Activated CD4-positive, alpha-beta T cell treated with anti-CD3 and anti-CD28 coated beads for 36 hours (primary cell): ENCODE measurements at regions of chr11 and their contacts with region 1.

Region 1: DNA sequence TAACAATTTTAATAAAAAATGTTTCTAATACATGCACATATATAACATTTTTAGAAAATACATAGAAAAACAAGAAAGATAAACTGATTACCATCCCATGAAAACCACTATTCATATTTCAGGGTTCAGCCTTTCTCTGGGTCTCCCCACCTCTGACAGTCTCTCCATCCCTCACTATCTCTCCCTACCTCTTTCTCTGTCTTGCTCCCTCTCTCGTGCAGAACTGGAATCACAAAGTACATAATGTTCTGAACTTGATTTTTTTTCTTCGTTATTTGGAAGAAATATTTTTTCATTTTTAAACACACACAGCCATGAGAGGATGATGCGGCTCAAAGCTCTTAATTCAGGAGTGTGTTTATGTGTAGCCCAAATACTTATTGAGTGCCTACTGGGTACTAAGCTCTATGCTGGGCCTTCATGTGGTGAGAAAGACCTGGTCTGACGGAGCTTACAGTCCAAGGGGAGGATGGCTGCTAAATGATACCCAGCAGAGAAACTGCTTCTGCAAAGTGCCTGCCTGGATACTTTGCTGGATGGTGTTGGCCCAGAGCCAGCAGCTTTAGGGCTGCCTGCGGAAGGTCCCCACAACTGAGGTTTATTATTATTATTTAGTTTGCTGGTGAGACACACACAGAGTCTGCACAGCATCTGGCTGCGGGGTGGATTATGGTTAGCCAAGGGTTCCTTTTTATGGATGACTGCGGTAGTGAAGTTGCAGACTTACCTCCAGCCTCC is 42.6 kb downstream of the SC5D start:
- DNase-seq: no peak
- ATAC-seq: no peak
- H3K4me3 Mint-ChIP-seq: no peak overlapping the region
- H3K27ac Mint-ChIP-seq: no peak overlapping the region
- H3K4me1 Mint-ChIP-seq: peaks cover 25% of the 10 kb centered on the region
- H3K27me3 Mint-ChIP-seq: no peaks in the 10 kb centered on the region

Region 2: GRCh38 chr11:121376130-121376529 is 41.0 kb after region 1 on chr11:
- CTCF ChIA-PET with region 1: interaction called, 3 read pairs
- POLR2A ChIA-PET with region 1: no interaction called
- intact Hi-C with region 1: loop called in 1 of 2 experiments (anchors 5 kb)
- DNase-seq: no peak
- ATAC-seq: no peak
- H3K4me3 Mint-ChIP-seq: no peak overlapping the region
- H3K27ac Mint-ChIP-seq: no peak overlapping the region
- H3K4me1 Mint-ChIP-seq: peaks cover 66% of the 10 kb centered on the region
- H3K27me3 Mint-ChIP-seq: no peaks in the 10 kb centered on the region